Activated B cell treated with CpG ODN at 0.5 μM for 24 hours (primary cell): ENCODE measurements at regions of chr2 and their contacts with region 1.

Region 1: DNA sequence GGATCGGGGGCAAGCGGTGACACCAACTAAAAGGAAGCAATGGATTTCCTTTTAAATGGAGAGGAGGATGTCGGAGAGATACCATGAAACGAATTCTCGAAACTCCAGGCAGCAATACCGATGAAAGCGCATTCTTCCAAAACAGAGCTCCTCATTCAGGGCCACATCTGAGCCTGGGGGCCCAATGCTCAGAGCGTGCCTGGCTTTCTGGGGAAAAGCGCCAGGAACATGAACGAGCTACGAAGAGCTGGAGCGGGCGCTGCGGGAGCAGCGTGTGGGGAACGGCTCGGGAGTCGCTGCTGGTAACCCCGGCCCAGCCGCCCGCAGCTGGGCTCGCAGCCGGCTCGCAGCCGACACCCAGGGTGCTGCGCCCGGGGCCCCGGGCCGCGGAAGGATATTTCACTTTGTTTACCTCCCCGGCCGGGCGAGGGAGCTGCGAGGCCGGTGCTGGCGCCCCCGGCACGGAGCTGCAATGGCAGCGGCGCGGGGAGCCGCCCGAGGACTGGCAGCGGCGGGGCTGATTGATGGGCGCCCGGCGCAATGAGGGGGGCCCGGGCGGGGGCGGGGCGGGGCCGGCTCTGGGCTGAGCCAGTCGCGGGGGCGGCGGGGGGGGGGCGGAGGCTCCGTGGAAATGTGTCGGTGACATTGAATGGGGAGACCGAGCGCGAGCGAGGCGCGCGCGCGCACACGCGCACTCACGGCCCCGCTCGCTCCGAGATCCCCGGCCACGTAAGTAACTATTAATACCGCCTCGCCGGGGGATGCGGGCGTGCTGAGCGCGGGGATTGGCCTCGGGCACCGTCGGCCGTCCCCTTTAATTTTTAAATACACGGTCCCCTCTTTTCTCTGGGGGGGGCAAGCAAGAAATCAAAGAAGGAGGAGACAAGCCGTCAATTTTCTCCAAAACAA is at the start of gene TRIB2:
- DNase-seq: peak; percentile 79
- ATAC-seq: peak; percentile 84
- H3K4me3 Mint-ChIP-seq: peak within 1 kb of the TSS; percentile 97
- H3K27ac Mint-ChIP-seq: peak within 1 kb of the TSS; percentile 91
- H3K4me1 Mint-ChIP-seq: peaks cover 42% of the 10 kb centered on the region
- H3K27me3 Mint-ChIP-seq: no peaks in the 10 kb centered on the region
- CTCF ChIP-seq: no peak
- total RNA-seq, gene TRIB2: 17.7 and 19.3 TPM in 2 replicates

Region 2: DNA sequence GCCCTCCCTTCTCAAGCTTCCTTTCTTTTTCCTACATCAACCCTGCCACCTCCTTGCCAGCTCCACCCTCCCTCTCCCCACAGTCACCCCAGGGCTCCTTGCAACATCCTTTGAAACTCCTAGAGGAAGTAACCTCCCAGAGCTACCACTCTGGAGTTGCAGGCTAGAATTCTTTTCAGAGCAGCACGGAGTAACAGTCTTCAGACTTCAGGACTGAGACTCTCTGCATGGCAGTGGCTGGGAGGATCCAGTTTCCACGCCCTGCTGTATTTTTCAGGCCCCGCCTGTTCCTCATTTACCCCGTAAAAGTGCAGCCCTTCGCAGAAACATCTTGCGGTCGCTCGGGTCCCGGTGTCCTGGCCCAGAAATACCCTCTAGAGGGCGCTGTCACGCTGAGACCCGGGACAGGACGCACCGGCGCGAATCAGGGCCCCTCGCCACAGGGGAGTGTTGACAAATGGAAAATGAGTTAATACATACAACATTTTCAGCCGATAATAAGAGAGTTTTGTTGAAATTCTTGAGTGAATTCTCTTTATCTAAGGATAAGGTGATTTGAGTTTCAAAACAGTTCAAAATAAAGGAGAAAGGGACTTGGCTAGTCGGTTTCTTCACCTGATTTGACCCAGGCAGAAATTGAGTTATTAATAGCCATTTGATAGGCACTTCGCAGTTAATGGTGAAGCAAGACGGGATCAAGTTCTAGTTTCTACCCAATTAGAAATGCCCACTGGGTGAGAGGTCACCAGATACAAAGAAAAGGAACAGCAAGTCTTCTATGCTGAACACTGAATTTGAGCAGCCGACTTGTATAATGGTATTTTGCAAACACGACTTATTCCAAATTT is 1028.1 kb before region 1 on chr2:
- CTCF ChIA-PET with region 1: no interaction called
- POLR2A ChIA-PET with region 1: no interaction called
- intact Hi-C with region 1: loop called (anchors 2 kb)
- DNase-seq: peak; percentile 68
- ATAC-seq: peak; percentile 87
- H3K4me3 Mint-ChIP-seq: peak overlapping the region; percentile 39
- H3K27ac Mint-ChIP-seq: no peak overlapping the region
- H3K4me1 Mint-ChIP-seq: peaks cover 9% of the 10 kb centered on the region
- H3K27me3 Mint-ChIP-seq: peaks cover 8% of the 10 kb centered on the region
- CTCF ChIP-seq: no peak

Region 3: DNA sequence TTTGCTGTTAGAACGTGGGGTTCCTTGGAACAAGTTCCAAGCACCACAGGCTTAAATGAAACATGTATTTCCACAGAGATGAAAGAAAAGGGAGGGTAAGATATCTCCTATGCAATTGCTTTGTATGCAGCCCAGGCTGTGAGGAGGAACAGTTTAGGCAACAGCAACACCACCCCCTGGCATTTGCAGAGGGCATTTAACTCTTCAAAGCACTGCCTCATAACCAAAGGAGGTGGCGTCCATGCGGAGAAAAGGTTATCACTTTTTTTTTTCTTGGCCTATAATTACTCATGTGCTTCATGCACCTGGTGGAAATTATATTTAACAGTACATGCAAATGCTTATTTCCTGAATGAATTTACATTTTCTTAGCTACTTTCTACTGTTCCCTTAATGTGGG is 684.1 kb before region 1 on chr2:
- CTCF ChIA-PET with region 1: interaction called, 7 read pairs
- POLR2A ChIA-PET with region 1: interaction called, 12 read pairs
- intact Hi-C with region 1: loop called (anchors 1 kb)
- DNase-seq: no peak
- ATAC-seq: peak; percentile 86
- H3K4me3 Mint-ChIP-seq: peak overlapping the region; percentile 62
- H3K27ac Mint-ChIP-seq: peak overlapping the region; percentile 74
- H3K4me1 Mint-ChIP-seq: peaks cover 64% of the 10 kb centered on the region
- H3K27me3 Mint-ChIP-seq: no peaks in the 10 kb centered on the region
- CTCF ChIP-seq: no peak

Region 4: GRCh38 chr2:12270876-12271588 is 445.5 kb before region 1 on chr2:
- CTCF ChIA-PET with region 1: interaction called, 4 read pairs
- POLR2A ChIA-PET with region 1: no interaction called
- intact Hi-C with region 1: loop called (anchors 5 kb)
- DNase-seq: no peak
- ATAC-seq: peak; percentile 28
- H3K4me3 Mint-ChIP-seq: peak overlapping the region; percentile 74
- H3K27ac Mint-ChIP-seq: peak overlapping the region; percentile 54
- H3K4me1 Mint-ChIP-seq: peaks cover 21% of the 10 kb centered on the region
- H3K27me3 Mint-ChIP-seq: no peaks in the 10 kb centered on the region
- CTCF ChIP-seq: no peak

Region 5: DNA sequence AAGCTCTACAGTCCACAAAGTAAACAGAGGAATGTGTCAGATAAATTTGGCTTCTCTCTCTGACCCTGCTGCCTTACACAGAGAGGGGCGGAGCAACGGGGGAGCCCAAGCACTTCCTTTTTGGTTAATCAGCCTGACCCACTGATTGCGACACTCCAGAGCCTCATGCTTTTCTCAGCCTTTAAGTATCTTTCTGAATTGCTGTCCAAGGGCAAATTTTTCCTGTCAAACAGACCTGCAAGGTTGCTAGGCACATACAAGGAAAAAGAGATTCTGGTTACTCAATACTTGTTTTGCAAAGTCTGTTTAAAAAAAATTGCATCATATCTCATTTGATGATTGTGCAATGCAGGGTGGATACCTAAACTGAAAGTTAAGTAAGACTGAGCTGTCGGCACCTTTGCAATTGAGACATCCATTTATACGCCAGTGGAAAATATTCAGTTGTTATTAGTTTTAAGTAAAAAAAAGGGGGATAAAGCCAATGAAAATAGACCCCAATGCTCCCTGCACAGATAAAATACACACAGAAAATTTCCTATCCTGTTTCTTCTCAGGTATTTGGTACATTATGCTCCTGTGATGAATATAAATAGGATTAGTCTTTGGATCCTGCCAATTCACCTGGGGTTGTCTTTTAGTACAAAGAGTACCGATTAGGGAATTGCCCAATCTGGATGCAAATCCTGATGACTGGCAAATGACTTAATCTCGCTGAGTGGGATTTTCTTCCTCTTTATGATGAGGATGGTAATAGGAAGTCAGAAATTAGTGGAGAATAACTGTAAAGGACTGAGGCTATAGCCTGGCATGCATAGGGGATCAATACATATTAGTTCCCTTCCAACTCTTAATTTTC is 260.0 kb before region 1 on chr2:
- CTCF ChIA-PET with region 1: interaction called, 4 read pairs
- POLR2A ChIA-PET with region 1: no interaction called
- intact Hi-C with region 1: loop called (anchors 1 kb)
- DNase-seq: peak; percentile 21
- ATAC-seq: peak; percentile 93
- H3K4me3 Mint-ChIP-seq: peak overlapping the region; percentile 83
- H3K27ac Mint-ChIP-seq: peak overlapping the region; percentile 86
- H3K4me1 Mint-ChIP-seq: peaks cover 25% of the 10 kb centered on the region
- H3K27me3 Mint-ChIP-seq: no peaks in the 10 kb centered on the region
- CTCF ChIP-seq: no peak

Region 6: GRCh38 chr2:12728221-12728777 is 11.8 kb after region 1 on chr2:
- CTCF ChIA-PET with region 1: interaction called, 23 read pairs
- POLR2A ChIA-PET with region 1: interaction called, 33 read pairs
- intact Hi-C with region 1: loop called (anchors 1 kb)
- DNase-seq: peak; percentile 37
- ATAC-seq: peak; percentile 84
- H3K4me3 Mint-ChIP-seq: peak overlapping the region; percentile 74
- H3K27ac Mint-ChIP-seq: peak overlapping the region; percentile 88
- H3K4me1 Mint-ChIP-seq: peaks cover 92% of the 10 kb centered on the region
- H3K27me3 Mint-ChIP-seq: no peaks in the 10 kb centered on the region
- CTCF ChIP-seq: no peak